ENCODE measurements at regions of chr2 and their contacts with region 1.

Region 1: GRCh38 chr2:106167067-106167466 is 27.0 kb downstream of the UXS1 start:
- DNase-seq: no peak
- ATAC-seq: no peak
- H3K4me3 ChIP-seq: no peak overlapping the region
- H3K4me3 Mint-ChIP-seq: peak overlapping the region in 1 of 3 donors; percentile 0
- H3K27ac ChIP-seq: peak overlapping the region; percentile 28
- H3K27ac Mint-ChIP-seq: peak overlapping the region; percentile 90 to 99
- H3K4me1 ChIP-seq: peaks cover 42 to 46% of the 10 kb centered on the region in 2 experiments
- H3K4me1 Mint-ChIP-seq: peaks cover 83 to 93% (median 90%) of the 10 kb centered on the region in 3 donors
- H3K27me3 ChIP-seq: no peaks in the 10 kb centered on the region
- H3K27me3 Mint-ChIP-seq: no peaks in the 10 kb centered on the region

Region 2: DNA sequence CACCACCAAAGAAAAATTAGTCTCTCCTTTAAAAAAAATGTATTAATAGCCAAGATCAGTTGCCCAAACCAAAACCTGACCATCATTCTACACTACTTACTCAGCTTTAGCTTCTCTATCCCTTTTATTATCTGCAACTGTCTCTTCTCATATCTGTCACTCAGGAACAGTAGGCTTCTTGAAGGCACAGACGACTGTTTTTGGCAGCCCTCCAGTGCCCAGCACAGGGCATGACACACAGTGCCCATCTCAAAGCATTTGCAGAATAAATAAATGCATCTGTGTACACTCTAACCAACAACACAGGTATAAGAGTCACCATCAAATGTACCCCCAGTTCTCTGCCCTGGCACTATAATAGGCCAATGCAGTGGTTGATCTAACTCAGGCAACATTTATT is 90.1 kb before region 1 on chr2:
- CTCF ChIA-PET with region 1: no interaction called
- POLR2A ChIA-PET with region 1: no interaction called
- DNase-seq: peak in 1 of 35 experiments; percentile 47
- ATAC-seq: peak in 2 of 4 experiments; percentile 42 to 46
- H3K4me3 ChIP-seq: no peak overlapping the region
- H3K4me3 Mint-ChIP-seq: peak overlapping the region in 1 of 3 donors; percentile 48
- H3K27ac ChIP-seq: no peak overlapping the region
- H3K27ac Mint-ChIP-seq: no peak overlapping the region
- H3K4me1 ChIP-seq: peaks cover 17 to 25% of the 10 kb centered on the region in 2 experiments
- H3K4me1 Mint-ChIP-seq: peaks cover 33 to 58% (median 38%) of the 10 kb centered on the region in 3 donors
- H3K27me3 ChIP-seq: no peaks in the 10 kb centered on the region
- H3K27me3 Mint-ChIP-seq: no peaks in the 10 kb centered on the region

Region 3: DNA sequence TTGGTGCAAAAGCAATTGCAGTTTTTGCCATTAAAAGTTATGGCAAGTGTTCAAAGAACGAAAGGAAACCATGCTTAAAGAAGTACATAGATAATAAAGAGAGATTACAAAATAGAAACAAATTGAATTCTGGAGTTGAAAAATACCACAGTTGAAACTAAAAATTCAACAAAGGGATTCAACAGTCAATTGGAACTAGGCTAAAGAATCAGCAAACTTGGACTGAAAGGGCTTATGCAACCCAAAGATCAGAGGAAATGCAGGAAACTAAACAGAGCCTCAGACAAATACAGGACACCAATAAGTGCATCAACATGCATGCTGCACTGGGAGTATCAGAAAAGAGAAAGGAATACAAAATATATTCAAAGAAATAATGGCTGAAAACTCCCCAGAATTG is 13.3 kb before region 1 on chr2:
- CTCF ChIA-PET with region 1: interaction called, 4 to 15 read pairs
- POLR2A ChIA-PET with region 1: no interaction called
- DNase-seq: no peak
- ATAC-seq: no peak
- H3K4me3 ChIP-seq: no peak overlapping the region
- H3K4me3 Mint-ChIP-seq: no peak overlapping the region
- H3K27ac ChIP-seq: no peak overlapping the region
- H3K27ac Mint-ChIP-seq: peak overlapping the region; percentile 70 to 85
- H3K4me1 ChIP-seq: peaks cover 16 to 19% of the 10 kb centered on the region in 2 experiments
- H3K4me1 Mint-ChIP-seq: peaks cover 68 to 91% (median 82%) of the 10 kb centered on the region in 3 donors
- H3K27me3 ChIP-seq: no peaks in the 10 kb centered on the region
- H3K27me3 Mint-ChIP-seq: no peaks in the 10 kb centered on the region

Region 4: DNA sequence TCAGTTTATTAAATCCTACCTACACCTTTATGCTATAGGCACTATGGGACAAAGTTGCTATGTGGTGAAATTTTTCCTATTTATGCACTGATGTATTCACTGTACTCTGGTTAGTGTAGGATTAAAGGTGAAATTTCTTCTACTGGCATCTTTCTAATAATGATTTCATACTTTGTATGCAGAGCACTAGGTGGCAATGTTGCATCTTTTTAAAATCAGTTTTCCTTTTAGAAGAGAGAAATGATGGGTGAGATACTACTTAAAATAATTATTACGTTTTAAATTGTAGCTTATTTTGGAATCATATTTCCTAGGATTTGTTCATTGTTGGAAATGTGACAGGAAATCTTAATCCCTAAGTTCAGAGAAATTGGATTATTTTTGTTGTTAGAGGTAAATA is 471.0 kb after region 1 on chr2:
- CTCF ChIA-PET with region 1: interaction called in 1 of 2 experiments, 10 read pairs
- POLR2A ChIA-PET with region 1: no interaction called
- DNase-seq: no peak
- ATAC-seq: no peak
- H3K4me3 ChIP-seq: no peak overlapping the region
- H3K4me3 Mint-ChIP-seq: no peak overlapping the region
- H3K27ac ChIP-seq: no peak overlapping the region
- H3K27ac Mint-ChIP-seq: no peak overlapping the region
- H3K4me1 ChIP-seq: no peaks in the 10 kb centered on the region
- H3K4me1 Mint-ChIP-seq: no peaks in the 10 kb centered on the region
- H3K27me3 ChIP-seq: no peaks in the 10 kb centered on the region
- H3K27me3 Mint-ChIP-seq: peaks cover 5 to 7% of the 10 kb centered on the region in 2 donors